CD8-positive, alpha-beta T cell (primary cell): ENCODE measurements at regions of chr2 and their contacts with region 1.

Region 1: GRCh38 chr2:174577967-174578589 is 19.5 kb downstream of the WIPF1 start:
- DNase-seq: peak in 6 of 9 experiments; percentile 33 to 87 (median 67)
- ATAC-seq: peak; percentile 84
- H3K4me3 ChIP-seq: no peak overlapping the region
- H3K4me3 Mint-ChIP-seq: no peak overlapping the region
- H3K27ac ChIP-seq: peak overlapping the region in 1 of 2 experiments; percentile 5
- H3K27ac Mint-ChIP-seq: peak overlapping the region; percentile 83
- H3K4me1 ChIP-seq: peaks cover 65% of the 10 kb centered on the region
- H3K4me1 Mint-ChIP-seq: peaks cover 80% of the 10 kb centered on the region
- H3K27me3 ChIP-seq: no peaks in the 10 kb centered on the region
- H3K27me3 Mint-ChIP-seq: no peaks in the 10 kb centered on the region
- CTCF ChIP-seq: peak; percentile 83

Region 2: DNA sequence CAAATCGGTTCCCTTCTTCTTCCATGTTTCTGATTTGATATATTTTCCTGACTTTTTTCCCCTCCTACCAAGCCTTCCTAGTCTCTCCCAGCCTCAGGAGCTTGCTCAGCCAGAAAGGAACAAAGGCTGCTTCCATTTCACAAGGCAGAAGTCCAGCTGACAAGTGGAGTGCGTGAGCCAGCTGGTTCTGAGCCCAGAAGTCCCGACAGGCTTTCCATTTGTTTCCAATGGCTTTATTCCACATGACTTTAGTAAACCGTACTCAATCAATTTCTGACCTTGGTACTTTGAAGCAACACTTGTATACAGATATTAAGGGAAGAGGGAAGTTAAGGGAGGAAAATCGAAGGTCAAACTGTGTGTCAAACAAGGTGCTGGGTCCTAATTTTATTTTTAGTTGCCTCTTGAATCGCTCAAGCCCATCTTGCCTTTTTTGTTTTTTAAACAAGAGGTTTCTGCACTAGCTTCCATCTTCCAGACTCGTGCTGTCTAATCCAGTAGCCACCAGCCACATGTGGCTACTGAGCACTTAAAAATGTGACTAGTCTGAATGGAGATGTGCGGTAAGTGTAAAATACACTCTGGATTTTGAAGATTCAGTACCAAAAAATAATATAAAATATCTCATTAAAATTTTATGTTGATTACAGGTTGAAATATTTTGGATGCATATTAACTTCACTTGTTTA is 16.7 kb before region 1 on chr2:
- CTCF ChIA-PET with region 1: interaction called, 17 read pairs
- POLR2A ChIA-PET with region 1: interaction called, 4 read pairs
- intact Hi-C with region 1: loop called in 1 of 2 experiments (anchors 1 kb)
- DNase-seq: no peak
- ATAC-seq: no peak
- H3K4me3 ChIP-seq: no peak overlapping the region
- H3K4me3 Mint-ChIP-seq: no peak overlapping the region
- H3K27ac ChIP-seq: peak overlapping the region in 1 of 2 experiments; percentile 34
- H3K27ac Mint-ChIP-seq: peak overlapping the region; percentile 81
- H3K4me1 ChIP-seq: no peaks in the 10 kb centered on the region
- H3K4me1 Mint-ChIP-seq: peaks cover 7% of the 10 kb centered on the region
- H3K27me3 ChIP-seq: no peaks in the 10 kb centered on the region
- H3K27me3 Mint-ChIP-seq: no peaks in the 10 kb centered on the region
- CTCF ChIP-seq: no peak

Region 3: DNA sequence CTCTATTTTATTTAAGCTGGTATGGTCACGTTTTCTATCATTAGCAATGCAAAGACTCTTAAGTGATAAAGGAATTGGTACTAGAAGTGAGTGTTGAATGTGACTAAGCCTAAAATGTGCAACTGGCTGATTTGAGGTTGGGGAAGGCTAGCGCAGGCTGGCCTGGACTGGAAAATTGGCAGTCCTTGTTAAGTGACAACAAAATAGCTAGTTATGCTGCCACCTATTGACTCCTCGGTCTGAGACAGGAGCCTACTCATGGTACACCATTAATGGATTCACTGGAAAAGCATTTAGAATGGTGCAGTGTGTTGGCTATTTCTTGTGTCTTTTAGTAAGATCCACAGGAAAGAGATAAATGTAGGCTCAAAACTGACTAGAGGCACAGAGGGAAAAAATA is 25.2 kb after region 1 on chr2:
- CTCF ChIA-PET with region 1: interaction called, 289 read pairs
- POLR2A ChIA-PET with region 1: interaction called, 3 read pairs
- intact Hi-C with region 1: loop called (anchors 1 kb)
- DNase-seq: peak in 6 of 9 experiments; percentile 31 to 86 (median 64)
- ATAC-seq: peak; percentile 67
- H3K4me3 ChIP-seq: no peak overlapping the region
- H3K4me3 Mint-ChIP-seq: no peak overlapping the region
- H3K27ac ChIP-seq: peak overlapping the region in 1 of 2 experiments; percentile 11
- H3K27ac Mint-ChIP-seq: peak overlapping the region; percentile 85
- H3K4me1 ChIP-seq: peaks cover 76% of the 10 kb centered on the region
- H3K4me1 Mint-ChIP-seq: peaks cover 86% of the 10 kb centered on the region
- H3K27me3 ChIP-seq: no peaks in the 10 kb centered on the region
- H3K27me3 Mint-ChIP-seq: no peaks in the 10 kb centered on the region
- CTCF ChIP-seq: peak; percentile 65

Region 4: GRCh38 chr2:174615871-174616436 is 37.9 kb after region 1 on chr2:
- CTCF ChIA-PET with region 1: interaction called, 289 read pairs
- POLR2A ChIA-PET with region 1: no interaction called
- intact Hi-C with region 1: loop called in 1 of 2 experiments (anchors 5 kb)
- DNase-seq: peak in 1 of 9 experiments; percentile 52
- ATAC-seq: peak; percentile 69
- H3K4me3 ChIP-seq: no peak overlapping the region
- H3K4me3 Mint-ChIP-seq: peak overlapping the region; percentile 12
- H3K27ac ChIP-seq: peak overlapping the region in 1 of 2 experiments; percentile 60
- H3K27ac Mint-ChIP-seq: peak overlapping the region; percentile 58
- H3K4me1 ChIP-seq: peaks cover 62% of the 10 kb centered on the region
- H3K4me1 Mint-ChIP-seq: peaks cover 83% of the 10 kb centered on the region
- H3K27me3 ChIP-seq: no peaks in the 10 kb centered on the region
- H3K27me3 Mint-ChIP-seq: no peaks in the 10 kb centered on the region
- CTCF ChIP-seq: no peak

Region 5: GRCh38 chr2:174634130-174635014 is 56.3 kb after region 1 on chr2:
- CTCF ChIA-PET with region 1: interaction called, 12 read pairs
- POLR2A ChIA-PET with region 1: interaction called, 5 read pairs
- intact Hi-C with region 1: loop called (anchors 1 to 2 kb)
- DNase-seq: peak in 8 of 9 experiments; percentile 14 to 83 (median 51)
- ATAC-seq: peak; percentile 74
- H3K4me3 ChIP-seq: peak overlapping the region; percentile 70 to 71
- H3K4me3 Mint-ChIP-seq: peak overlapping the region; percentile 95
- H3K27ac ChIP-seq: peak overlapping the region; percentile 49 to 90
- H3K27ac Mint-ChIP-seq: peak overlapping the region; percentile 98
- H3K4me1 ChIP-seq: peaks cover 46% of the 10 kb centered on the region
- H3K4me1 Mint-ChIP-seq: peaks cover 71% of the 10 kb centered on the region
- H3K27me3 ChIP-seq: no peaks in the 10 kb centered on the region
- H3K27me3 Mint-ChIP-seq: no peaks in the 10 kb centered on the region
- CTCF ChIP-seq: no peak

Region 6: DNA sequence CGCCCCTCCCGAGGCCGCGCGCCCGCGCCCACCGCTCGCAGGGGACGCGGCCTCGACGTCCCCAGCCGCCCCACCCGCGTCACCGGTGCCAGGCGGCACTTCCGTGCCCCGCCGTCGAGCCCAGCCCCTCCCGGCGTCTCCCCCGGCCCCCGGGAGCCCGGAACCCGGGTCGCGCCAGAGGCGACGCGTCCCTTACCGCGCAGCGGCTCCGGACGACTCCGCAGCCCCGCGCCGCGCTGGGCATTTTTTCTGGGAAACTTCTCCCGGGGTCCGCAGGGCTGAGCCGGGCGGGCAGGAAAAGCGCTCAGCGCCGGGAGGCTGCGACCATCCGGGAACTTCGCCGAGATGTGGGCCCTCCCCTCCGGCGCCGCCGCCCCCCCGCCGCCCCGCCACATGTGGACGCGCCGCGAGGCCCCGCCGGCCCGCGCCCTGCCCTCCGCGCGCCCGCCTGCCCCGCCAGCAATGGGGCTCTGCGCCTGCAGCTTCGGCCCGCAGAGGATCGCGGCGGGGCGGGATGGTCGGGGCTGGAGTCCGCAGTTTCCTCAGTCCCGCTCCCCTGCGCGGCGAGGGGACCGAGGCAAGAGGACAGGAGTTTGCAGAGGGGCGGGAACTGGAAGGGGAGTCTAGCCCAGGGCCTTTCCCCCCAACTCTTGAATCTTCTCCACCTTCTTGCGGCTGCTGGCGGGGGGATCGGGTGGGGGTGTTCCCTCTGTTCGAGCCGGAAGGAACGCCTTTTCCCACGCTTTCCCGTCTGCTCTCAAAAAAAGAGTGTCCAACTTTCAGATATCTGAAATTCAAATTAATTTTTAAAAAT is 104.7 kb after region 1 on chr2:
- CTCF ChIA-PET with region 1: interaction called, 189 read pairs
- POLR2A ChIA-PET with region 1: interaction called, 3 read pairs
- intact Hi-C with region 1: loop called in 1 of 2 experiments (anchors 1 kb)
- DNase-seq: peak; percentile 33 to 83 (median 67)
- ATAC-seq: peak; percentile 74
- H3K4me3 ChIP-seq: peak overlapping the region; percentile 73 to 81
- H3K4me3 Mint-ChIP-seq: peak overlapping the region; percentile 91
- H3K27ac ChIP-seq: peak overlapping the region; percentile 41 to 70
- H3K27ac Mint-ChIP-seq: peak overlapping the region; percentile 93
- H3K4me1 ChIP-seq: peaks cover 35% of the 10 kb centered on the region
- H3K4me1 Mint-ChIP-seq: peaks cover 55% of the 10 kb centered on the region
- H3K27me3 ChIP-seq: no peaks in the 10 kb centered on the region
- H3K27me3 Mint-ChIP-seq: no peaks in the 10 kb centered on the region
- CTCF ChIP-seq: no peak